WTC11 (cell line): ENCODE measurements at regions of chr2 and their contacts with region 1.

Region 1: DNA sequence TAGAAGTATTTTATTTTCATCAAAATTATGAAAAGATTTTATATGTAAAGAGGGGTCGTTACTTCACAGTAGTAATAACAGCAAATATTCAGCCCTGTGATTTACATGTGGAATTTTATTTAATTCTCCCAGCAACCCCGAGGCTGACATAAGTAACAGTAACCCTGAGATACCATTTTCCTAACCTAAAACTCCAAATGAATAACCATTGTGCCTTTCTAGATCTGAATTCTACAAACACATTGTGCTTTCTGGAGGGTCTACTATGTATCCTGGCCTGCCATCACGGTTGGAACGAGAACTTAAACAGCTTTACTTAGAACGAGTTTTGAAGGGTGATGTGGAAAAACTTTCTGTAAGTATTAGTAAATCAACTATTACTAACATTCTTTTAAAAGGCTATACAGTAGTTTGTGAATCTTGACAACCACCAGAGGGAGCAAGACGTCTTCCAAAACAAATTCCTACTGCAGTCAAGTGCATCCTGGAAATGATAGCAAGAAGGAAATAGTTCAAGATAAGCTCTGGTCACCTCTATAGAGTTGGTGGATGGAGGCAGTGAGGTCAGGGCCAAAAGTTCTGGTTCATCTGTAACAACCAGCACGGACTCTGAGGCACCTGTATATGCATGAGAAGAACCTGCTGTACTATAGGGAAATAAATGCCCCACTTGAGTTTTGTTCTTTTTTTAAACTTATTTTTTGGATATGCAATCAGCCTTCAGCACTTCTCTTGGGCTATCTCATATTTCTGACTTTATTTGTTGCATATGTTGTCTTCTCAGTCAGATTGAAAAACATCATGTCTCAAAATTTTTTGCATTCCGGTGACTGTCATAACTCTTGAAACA is 37.4 kb downstream of the ACTR2 start:
- DNase-seq: no peak
- ATAC-seq: peak; percentile 44; the same call in 1 of the 2 replicates
- H3K4me3 Mint-ChIP-seq: no peak overlapping the region
- H3K27ac Mint-ChIP-seq: no peak overlapping the region
- H3K4me1 Mint-ChIP-seq: peaks cover 15% of the 10 kb centered on the region
- H3K27me3 Mint-ChIP-seq: peaks cover 25% of the 10 kb centered on the region
- CTCF ChIP-seq: peak; percentile 46

Region 2: GRCh38 chr2:65276609-65277008 is 11.6 kb after region 1 on chr2:
- CTCF ChIA-PET with region 1: interaction called, 11 read pairs
- POLR2A ChIA-PET with region 1: no interaction called
- DNase-seq: no peak
- ATAC-seq: no peak
- H3K4me3 Mint-ChIP-seq: no peak overlapping the region
- H3K27ac Mint-ChIP-seq: no peak overlapping the region
- H3K4me1 Mint-ChIP-seq: peaks cover 3% of the 10 kb centered on the region; the same call in 1 of the 2 replicates
- H3K27me3 Mint-ChIP-seq: peaks cover 100% of the 10 kb centered on the region
- CTCF ChIP-seq: no peak

Region 3: GRCh38 chr2:65566620-65567019 is 301.6 kb after region 1 on chr2:
- CTCF ChIA-PET with region 1: interaction called, 11 read pairs
- POLR2A ChIA-PET with region 1: no interaction called
- DNase-seq: no peak
- ATAC-seq: peak; percentile 85
- H3K4me3 Mint-ChIP-seq: no peak overlapping the region
- H3K27ac Mint-ChIP-seq: no peak overlapping the region
- H3K4me1 Mint-ChIP-seq: peaks cover 13% of the 10 kb centered on the region
- H3K27me3 Mint-ChIP-seq: peaks cover 53% of the 10 kb centered on the region
- CTCF ChIP-seq: no peak